Common myeloid progenitor, CD34-positive (primary cell): ENCODE measurements at regions of chr10 and their contacts with region 1.

Region 1: GRCh38 chr10:88565072-88565471 is 18.0 kb downstream of the RNLS start:
- DNase-seq: peak; percentile 33 to 60 (median 57)
- H3K4me3 ChIP-seq: no peak overlapping the region
- H3K27ac ChIP-seq: no peak overlapping the region
- H3K4me1 ChIP-seq: no peaks in the 10 kb centered on the region
- H3K27me3 ChIP-seq: no peaks in the 10 kb centered on the region

Region 2: GRCh38 chr10:88553116-88553752 is 11.8 kb before region 1 on chr10:
- CTCF ChIA-PET with region 1: interaction called, 20 read pairs
- POLR2A ChIA-PET with region 1: no interaction called
- DNase-seq: peak; percentile 83 to 92 (median 92)
- H3K4me3 ChIP-seq: no peak overlapping the region
- H3K27ac ChIP-seq: no peak overlapping the region
- H3K4me1 ChIP-seq: no peaks in the 10 kb centered on the region
- H3K27me3 ChIP-seq: no peaks in the 10 kb centered on the region

Region 3: DNA sequence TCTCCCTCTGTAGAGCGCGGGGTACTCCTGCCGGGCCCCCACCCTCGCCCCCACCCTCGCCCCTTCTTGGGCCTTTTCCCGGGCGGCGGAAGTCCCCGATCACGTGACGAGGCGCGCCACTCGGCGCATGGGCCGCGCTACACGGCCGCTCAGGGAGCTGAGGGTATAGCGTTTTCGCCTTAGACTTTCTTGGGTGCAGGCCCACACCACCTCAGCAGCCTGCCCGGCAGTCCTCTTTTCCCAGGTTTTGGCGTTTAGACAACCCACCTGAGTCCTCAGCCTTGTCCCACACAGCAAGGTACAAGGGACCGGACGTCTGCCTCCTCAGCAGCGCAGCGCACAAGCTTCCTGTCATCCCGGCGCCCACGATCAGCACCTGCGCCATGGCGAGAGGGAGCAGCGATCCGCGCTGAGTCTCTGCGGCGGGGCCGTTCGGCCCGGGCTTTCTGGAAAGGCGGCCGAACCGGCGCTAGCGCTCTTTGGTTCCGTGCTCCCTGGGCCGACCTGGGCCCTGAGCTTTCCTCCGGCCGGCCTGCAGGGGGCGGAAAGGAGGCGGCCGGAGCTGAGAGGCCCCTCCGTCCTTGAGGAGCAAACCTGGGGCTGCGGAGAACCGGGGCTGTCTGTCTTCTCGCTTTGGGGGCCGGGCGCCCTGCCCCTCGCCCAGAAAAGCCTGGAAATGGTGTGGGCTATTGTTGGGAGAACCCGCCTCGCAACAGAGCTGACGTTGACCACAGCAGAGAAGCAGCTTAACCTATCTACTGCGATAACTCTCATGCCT is 17.9 kb after region 1 on chr10 and contains the start of gene RNLS:
- CTCF ChIA-PET with region 1: interaction called, 13 read pairs
- POLR2A ChIA-PET with region 1: no interaction called
- DNase-seq: peak; percentile 67 to 85 (median 81)
- H3K4me3 ChIP-seq: peak within 1 kb of the TSS; percentile 55 to 93 (median 80)
- H3K27ac ChIP-seq: peak within 1 kb of the TSS; percentile 74 to 87
- H3K4me1 ChIP-seq: peaks cover 4 to 13% (median 6%) of the 10 kb centered on the region in 4 experiments
- H3K27me3 ChIP-seq: no peaks in the 10 kb centered on the region